B cell (primary cell): ENCODE measurements at regions of chr1 and their contacts with region 1.

Region 1: GRCh38 chr1:244864253-244865027 is at the start of gene HNRNPU:
- DNase-seq: peak; percentile 98
- ATAC-seq: peak; percentile 71
- H3K4me3 ChIP-seq: peak within 1 kb of the TSS; percentile 82 to 99 (median 98)
- H3K4me3 Mint-ChIP-seq: peak within 1 kb of the TSS; percentile 87
- H3K27ac ChIP-seq: peak within 1 kb of the TSS; percentile 98 to 99
- H3K27ac Mint-ChIP-seq: peak within 1 kb of the TSS; percentile 98
- H3K4me1 ChIP-seq: peaks cover 29 to 34% of the 10 kb centered on the region in 2 donors
- H3K4me1 Mint-ChIP-seq: peaks cover 36% of the 10 kb centered on the region
- H3K27me3 ChIP-seq: no peaks in the 10 kb centered on the region
- H3K27me3 Mint-ChIP-seq: no peaks in the 10 kb centered on the region
- CTCF ChIP-seq: peak; percentile 52
- total RNA-seq, gene HNRNPU: 406 and 415 TPM in 2 replicates

Region 2: DNA sequence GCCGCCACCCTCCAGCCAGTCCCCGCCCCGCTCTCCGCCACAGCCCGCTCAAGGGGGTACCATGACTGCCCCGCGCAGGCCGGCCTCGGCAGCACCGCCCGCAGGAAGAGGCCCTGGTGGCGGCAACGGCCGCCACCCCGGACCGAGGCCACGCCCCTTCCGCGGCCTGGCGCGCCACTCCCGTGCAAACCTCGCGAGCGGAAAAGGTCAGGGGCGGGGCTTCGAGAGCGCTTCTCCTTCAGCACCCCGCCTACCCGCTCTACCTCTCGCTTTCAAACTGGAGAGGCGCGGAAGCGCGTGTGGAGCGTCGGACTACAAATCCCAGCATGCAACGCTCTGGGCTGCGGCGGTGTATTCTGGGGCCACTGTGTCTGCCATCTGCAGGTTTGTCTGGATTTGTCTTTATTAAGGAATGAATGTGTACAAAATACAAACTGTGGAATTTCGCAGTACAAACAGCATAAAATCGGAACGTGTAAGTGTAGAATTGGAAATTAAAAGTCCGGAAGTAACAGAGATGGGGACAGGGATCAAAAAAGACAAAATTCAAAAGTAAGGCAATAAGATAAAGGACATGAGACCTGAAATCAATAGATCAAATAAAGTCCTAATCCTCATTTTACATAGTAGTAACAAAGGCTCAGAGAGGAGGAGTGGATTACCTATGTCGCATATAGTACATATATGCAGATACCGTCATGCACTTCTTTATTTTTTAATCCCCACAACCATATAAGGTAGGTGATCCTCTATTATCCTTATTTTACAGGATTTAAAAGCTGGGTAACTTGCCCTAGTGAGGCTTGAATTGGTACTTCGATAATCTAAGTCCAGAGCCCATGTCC is 412.3 kb before region 1 on chr1:
- CTCF ChIA-PET with region 1: no interaction called
- POLR2A ChIA-PET with region 1: no interaction called
- intact Hi-C with region 1: loop called (anchors 1 kb)
- DNase-seq: peak; percentile 100
- ATAC-seq: peak; percentile 92
- H3K4me3 ChIP-seq: peak overlapping the region in 4 of 5 experiments; percentile 88 to 98 (median 93)
- H3K4me3 Mint-ChIP-seq: peak overlapping the region; percentile 95
- H3K27ac ChIP-seq: peak overlapping the region; percentile 92 to 94
- H3K27ac Mint-ChIP-seq: peak overlapping the region; percentile 94
- H3K4me1 ChIP-seq: peaks cover 17 to 18% of the 10 kb centered on the region in 2 donors
- H3K4me1 Mint-ChIP-seq: peaks cover 35% of the 10 kb centered on the region
- H3K27me3 ChIP-seq: no peaks in the 10 kb centered on the region
- H3K27me3 Mint-ChIP-seq: no peaks in the 10 kb centered on the region
- CTCF ChIP-seq: peak; percentile 47

Region 3: DNA sequence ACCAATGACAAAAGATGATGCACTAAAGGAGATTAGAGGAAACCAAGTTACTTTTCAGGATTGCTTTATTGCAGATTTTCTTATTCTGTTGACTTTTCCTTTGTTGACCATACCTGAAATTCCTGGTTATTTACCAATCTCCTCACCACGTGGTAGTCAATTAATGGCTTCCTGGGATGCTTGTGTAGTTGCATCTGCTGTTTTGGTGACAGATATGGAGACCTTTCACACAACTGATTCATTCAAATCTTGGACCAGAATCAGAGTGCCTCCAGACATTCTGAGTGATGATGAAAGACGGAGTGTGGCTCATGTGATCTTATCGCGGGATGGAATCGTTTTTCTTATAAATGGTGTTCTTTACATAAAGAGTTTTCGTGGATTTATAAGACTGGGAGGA is 312.1 kb before region 1 on chr1:
- CTCF ChIA-PET with region 1: no interaction called
- POLR2A ChIA-PET with region 1: no interaction called
- intact Hi-C with region 1: no loop called
- DNase-seq: no peak
- ATAC-seq: no peak
- H3K4me3 ChIP-seq: no peak overlapping the region
- H3K4me3 Mint-ChIP-seq: no peak overlapping the region
- H3K27ac ChIP-seq: no peak overlapping the region
- H3K27ac Mint-ChIP-seq: no peak overlapping the region
- H3K4me1 ChIP-seq: no peaks in the 10 kb centered on the region
- H3K4me1 Mint-ChIP-seq: no peaks in the 10 kb centered on the region
- H3K27me3 ChIP-seq: no peaks in the 10 kb centered on the region
- H3K27me3 Mint-ChIP-seq: no peaks in the 10 kb centered on the region
- CTCF ChIP-seq: no peak

Region 4: GRCh38 chr1:244662604-244663003 is 201.8 kb before region 1 on chr1:
- CTCF ChIA-PET with region 1: no interaction called
- POLR2A ChIA-PET with region 1: no interaction called
- intact Hi-C with region 1: no loop called
- DNase-seq: no peak
- ATAC-seq: no peak
- H3K4me3 ChIP-seq: no peak overlapping the region
- H3K4me3 Mint-ChIP-seq: peak overlapping the region; percentile 52
- H3K27ac ChIP-seq: no peak overlapping the region
- H3K27ac Mint-ChIP-seq: no peak overlapping the region
- H3K4me1 ChIP-seq: peaks cover 32 to 40% of the 10 kb centered on the region in 2 donors
- H3K4me1 Mint-ChIP-seq: peaks cover 36% of the 10 kb centered on the region
- H3K27me3 ChIP-seq: no peaks in the 10 kb centered on the region
- H3K27me3 Mint-ChIP-seq: no peaks in the 10 kb centered on the region
- CTCF ChIP-seq: no peak

Region 5: GRCh38 chr1:244801246-244801645 is 63.2 kb before region 1 on chr1:
- CTCF ChIA-PET with region 1: interaction called, 16 read pairs
- POLR2A ChIA-PET with region 1: no interaction called
- intact Hi-C with region 1: loop called (anchors 2 kb)
- DNase-seq: peak; percentile 80
- ATAC-seq: peak; percentile 94
- H3K4me3 ChIP-seq: no peak overlapping the region
- H3K4me3 Mint-ChIP-seq: peak overlapping the region; percentile 68
- H3K27ac ChIP-seq: no peak overlapping the region
- H3K27ac Mint-ChIP-seq: peak overlapping the region; percentile 38
- H3K4me1 ChIP-seq: peaks cover 6 to 8% of the 10 kb centered on the region in 2 donors
- H3K4me1 Mint-ChIP-seq: peaks cover 2% of the 10 kb centered on the region
- H3K27me3 ChIP-seq: no peaks in the 10 kb centered on the region
- H3K27me3 Mint-ChIP-seq: peaks cover 10% of the 10 kb centered on the region
- CTCF ChIP-seq: peak; percentile 81

Region 6: DNA sequence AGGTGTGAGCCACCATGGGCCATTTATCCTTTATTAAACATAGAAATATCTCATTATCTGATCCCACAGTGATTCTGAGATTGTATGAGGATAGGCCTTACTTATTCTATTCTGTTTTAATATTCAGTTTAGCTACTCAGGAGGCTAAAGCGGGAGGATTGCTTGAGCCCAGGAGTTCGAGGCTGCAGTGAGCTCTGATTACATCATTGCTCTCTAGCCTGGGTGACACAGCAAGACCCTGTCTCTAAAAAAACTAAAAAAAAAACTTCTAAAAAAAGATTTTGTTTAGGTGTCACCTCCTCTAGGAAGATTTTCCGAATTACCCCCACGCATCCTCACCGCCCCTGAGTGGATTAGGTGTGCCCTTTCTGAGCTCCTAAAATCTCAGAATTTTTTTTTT is 14.2 kb after region 1 on chr1:
- CTCF ChIA-PET with region 1: no interaction called
- POLR2A ChIA-PET with region 1: interaction called, 22 read pairs
- intact Hi-C with region 1: no loop called
- DNase-seq: no peak
- ATAC-seq: no peak
- H3K4me3 ChIP-seq: no peak overlapping the region
- H3K4me3 Mint-ChIP-seq: no peak overlapping the region
- H3K27ac ChIP-seq: no peak overlapping the region
- H3K27ac Mint-ChIP-seq: no peak overlapping the region
- H3K4me1 ChIP-seq: peaks cover 0 to 4% of the 10 kb centered on the region in 2 donors
- H3K4me1 Mint-ChIP-seq: peaks cover 5% of the 10 kb centered on the region
- H3K27me3 ChIP-seq: no peaks in the 10 kb centered on the region
- H3K27me3 Mint-ChIP-seq: peaks cover 10% of the 10 kb centered on the region
- CTCF ChIP-seq: no peak

Region 7: DNA sequence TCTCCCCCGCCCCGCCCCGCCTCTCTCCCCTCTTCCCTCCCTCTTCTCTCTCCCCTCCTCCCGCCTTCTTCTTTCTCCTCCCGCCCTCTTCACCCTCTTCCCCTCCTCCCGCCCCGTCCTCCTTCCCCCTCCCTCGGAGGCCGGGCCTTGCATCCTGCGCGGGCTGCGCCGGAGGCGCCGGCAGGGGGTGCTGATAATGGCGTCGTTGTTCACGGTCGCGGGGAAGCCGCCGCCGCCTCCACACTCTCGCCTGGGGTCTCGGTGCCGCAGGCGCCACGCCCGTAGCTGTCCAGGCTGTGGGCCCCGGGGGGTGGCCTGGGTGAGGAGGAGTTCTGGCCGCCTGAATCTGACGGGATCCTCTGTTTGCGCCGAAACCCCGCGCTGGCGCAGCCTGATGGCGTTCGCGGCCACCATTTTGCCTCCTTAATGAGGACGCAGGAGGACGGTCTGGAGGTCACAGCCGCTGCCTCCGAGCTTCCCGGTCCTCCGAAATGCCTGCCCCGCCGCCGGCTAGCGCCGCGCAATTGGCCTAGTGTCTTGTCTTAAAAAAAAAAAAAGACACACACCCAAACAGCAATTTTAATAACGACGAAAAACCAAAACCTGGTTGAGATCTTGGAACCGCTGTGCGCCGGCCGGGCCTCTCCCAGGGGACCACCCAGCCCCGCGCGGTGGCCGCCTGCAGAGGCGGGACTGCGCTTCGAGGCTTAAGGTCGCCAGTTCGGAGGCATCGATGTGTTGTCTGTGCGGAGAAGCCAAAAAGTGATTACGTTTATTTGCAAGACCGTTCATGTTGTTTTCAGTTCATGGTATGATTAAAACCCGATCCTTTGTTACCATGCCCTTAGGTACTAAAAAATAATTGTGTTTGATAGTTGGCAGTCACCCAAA is 106.5 kb after region 1 on chr1:
- CTCF ChIA-PET with region 1: interaction called, 15 read pairs
- POLR2A ChIA-PET with region 1: interaction called, 105 read pairs
- intact Hi-C with region 1: loop called (anchors 1 kb)
- DNase-seq: peak; percentile 98
- ATAC-seq: peak; percentile 78
- H3K4me3 ChIP-seq: peak overlapping the region; percentile 79 to 98 (median 83)
- H3K4me3 Mint-ChIP-seq: peak overlapping the region; percentile 95
- H3K27ac ChIP-seq: peak overlapping the region; percentile 98 to 99
- H3K27ac Mint-ChIP-seq: peak overlapping the region; percentile 99
- H3K4me1 ChIP-seq: peaks cover 8 to 13% of the 10 kb centered on the region in 2 donors
- H3K4me1 Mint-ChIP-seq: peaks cover 17% of the 10 kb centered on the region
- H3K27me3 ChIP-seq: no peaks in the 10 kb centered on the region
- H3K27me3 Mint-ChIP-seq: no peaks in the 10 kb centered on the region
- CTCF ChIP-seq: peak; percentile 51

Region 8: GRCh38 chr1:246566128-246566812 is 1701.8 kb after region 1 on chr1 and contains the starts of genes CNST and TFB2M:
- CTCF ChIA-PET with region 1: no interaction called
- POLR2A ChIA-PET with region 1: interaction called, 14 read pairs
- intact Hi-C with region 1: no loop called
- DNase-seq: peak; percentile 98
- ATAC-seq: peak; percentile 90
- H3K4me3 ChIP-seq: peak within 1 kb of the TSS; percentile 70 to 100 (median 95)
- H3K4me3 Mint-ChIP-seq: peak within 1 kb of the TSS; percentile 98
- H3K27ac ChIP-seq: peak within 1 kb of the TSS; percentile 83 to 95
- H3K27ac Mint-ChIP-seq: peak within 1 kb of the TSS; percentile 94
- H3K4me1 ChIP-seq: peaks cover 50 to 53% of the 10 kb centered on the region in 2 donors
- H3K4me1 Mint-ChIP-seq: peaks cover 45% of the 10 kb centered on the region
- H3K27me3 ChIP-seq: no peaks in the 10 kb centered on the region
- H3K27me3 Mint-ChIP-seq: no peaks in the 10 kb centered on the region
- CTCF ChIP-seq: no peak
- total RNA-seq, gene CNST: 54.0 and 54.6 TPM in 2 replicates
- total RNA-seq, gene TFB2M: 11.6 and 14.7 TPM in 2 replicates